Mammary epithelial cell (primary cell): ENCODE measurements at regions of chr11 and their contacts with region 1.

Region 1: GRCh38 chr11:128039140-128040021 is 548.0 kb downstream of the ETS1 start:
- DNase-seq: peak; percentile 88
- H3K4me3 ChIP-seq: no peak overlapping the region
- H3K27ac ChIP-seq: peak overlapping the region; percentile 8
- H3K4me1 ChIP-seq: peaks cover 18% of the 10 kb centered on the region
- H3K27me3 ChIP-seq: no peaks in the 10 kb centered on the region
- CTCF ChIP-seq: peak; percentile 3 to 10

Region 2: GRCh38 chr11:127950162-127950561 is 89.2 kb before region 1 on chr11:
- CTCF ChIA-PET with region 1: no interaction called
- dilution Hi-C with region 1: no loop called
- in situ Hi-C with region 1: no loop called
- intact Hi-C with region 1: no loop called
- DNase-seq: no peak
- H3K4me3 ChIP-seq: no peak overlapping the region
- H3K27ac ChIP-seq: no peak overlapping the region
- H3K4me1 ChIP-seq: no peaks in the 10 kb centered on the region
- H3K27me3 ChIP-seq: no peaks in the 10 kb centered on the region
- CTCF ChIP-seq: no peak

Region 3: DNA sequence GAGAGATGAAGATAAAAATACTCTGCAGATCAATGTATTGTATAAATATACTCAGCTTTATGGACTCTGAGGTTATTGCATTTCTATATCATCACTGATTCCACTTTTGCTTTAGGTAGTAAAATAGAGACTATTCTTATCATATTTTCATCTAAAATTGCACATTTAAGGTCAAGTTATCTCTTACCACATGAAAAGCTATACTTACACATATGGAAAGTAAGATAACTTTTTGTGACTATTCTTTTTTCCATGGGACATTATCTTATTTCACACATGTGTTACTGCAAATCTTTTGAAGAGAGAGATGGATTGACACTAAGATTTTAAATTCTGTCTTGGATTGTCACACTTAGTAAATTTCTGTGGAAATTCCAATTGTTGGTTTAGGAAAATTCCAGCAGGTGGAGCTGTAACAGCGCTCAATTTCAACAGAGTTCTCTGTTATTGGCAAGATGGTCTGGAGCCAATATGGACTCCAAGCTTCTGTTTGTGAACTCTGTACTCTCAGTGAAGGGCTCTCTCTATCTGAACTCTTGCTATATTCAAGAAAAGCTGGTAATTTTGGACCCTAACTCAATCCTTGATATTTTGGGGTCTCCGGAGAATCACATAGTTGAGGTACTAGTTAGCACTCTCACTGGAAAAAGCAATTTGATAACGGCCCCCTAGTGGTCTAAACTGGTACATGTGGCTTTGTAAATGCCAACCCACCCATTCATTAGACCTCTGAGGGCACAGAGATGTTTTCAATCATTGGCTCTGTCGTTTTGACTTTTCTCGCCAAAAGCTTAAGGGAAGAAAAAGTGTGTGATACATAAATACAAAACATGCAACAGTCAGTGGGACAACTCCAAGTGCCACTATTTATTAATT is 118.3 kb after region 1 on chr11:
- CTCF ChIA-PET with region 1: interaction called, 3 read pairs
- dilution Hi-C with region 1: no loop called
- in situ Hi-C with region 1: loop called (anchors 5 to 10 kb)
- intact Hi-C with region 1: no loop called
- DNase-seq: peak; percentile 67
- H3K4me3 ChIP-seq: peak overlapping the region in 2 of 3 experiments; percentile 13 to 26
- H3K27ac ChIP-seq: peak overlapping the region; percentile 11
- H3K4me1 ChIP-seq: no peaks in the 10 kb centered on the region
- H3K27me3 ChIP-seq: no peaks in the 10 kb centered on the region
- CTCF ChIP-seq: peak; percentile 73 to 76

Region 4: DNA sequence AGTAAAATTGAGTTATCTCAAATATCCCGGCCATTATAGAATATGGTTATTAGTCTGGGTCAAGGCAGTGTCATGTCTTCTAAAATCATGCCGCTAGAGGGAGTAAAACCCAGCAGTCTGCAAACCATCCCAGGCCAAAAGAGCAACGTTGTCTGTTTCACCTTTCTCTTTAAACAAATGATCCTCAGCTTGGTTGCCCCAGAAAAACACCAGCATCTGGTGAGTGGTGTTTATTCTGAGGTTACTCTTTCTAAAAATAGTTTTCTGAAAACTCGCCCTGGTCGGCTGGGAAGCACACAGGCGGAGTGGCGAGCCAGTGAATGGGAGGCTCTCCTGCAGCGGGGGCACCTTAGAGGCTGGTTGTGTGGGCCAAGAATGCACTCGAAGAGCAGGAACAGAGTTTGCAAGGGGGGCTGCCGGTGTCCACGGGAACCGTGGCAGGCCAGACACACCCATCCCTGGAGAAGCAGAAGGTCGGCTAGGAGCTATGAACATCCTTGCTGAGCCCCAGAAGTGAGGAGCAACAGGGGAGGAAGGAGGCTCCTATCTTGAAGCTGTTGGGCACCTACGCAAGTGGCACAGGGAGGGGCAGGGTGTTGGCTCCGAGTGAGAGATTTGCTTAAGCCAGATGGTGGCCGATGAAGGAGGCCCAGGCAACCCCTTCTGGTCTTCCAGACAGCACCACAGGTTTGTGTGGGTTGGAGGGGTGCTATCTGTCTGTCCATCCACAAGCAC is 250.9 kb after region 1 on chr11:
- CTCF ChIA-PET with region 1: no interaction called
- dilution Hi-C with region 1: no loop called
- in situ Hi-C with region 1: loop called (anchors 25 kb)
- intact Hi-C with region 1: no loop called
- DNase-seq: peak; percentile 45
- H3K4me3 ChIP-seq: no peak overlapping the region
- H3K27ac ChIP-seq: no peak overlapping the region
- H3K4me1 ChIP-seq: peaks cover 4% of the 10 kb centered on the region
- H3K27me3 ChIP-seq: no peaks in the 10 kb centered on the region
- CTCF ChIP-seq: peak; percentile 79 to 86

Region 5: DNA sequence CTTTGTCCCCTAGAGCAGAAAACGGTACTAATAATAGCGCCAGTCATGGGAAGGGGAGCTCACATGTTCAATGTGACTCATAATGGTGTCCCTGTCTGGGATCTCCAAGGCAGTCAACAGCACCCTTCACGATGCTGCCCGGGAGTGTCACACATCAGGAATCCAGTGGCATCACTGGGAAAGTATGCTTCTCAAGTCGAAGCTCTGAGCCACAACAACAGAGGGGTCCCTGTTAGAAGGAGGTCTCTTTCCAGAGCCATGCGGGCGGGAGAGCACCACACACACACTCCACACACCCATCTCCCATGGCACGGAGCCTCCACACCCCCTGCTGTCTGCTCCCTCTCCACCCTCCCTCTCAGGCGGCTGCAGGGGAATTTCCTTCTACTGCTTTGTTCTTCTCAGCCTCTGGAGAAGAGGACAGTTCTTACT is 428.2 kb after region 1 on chr11:
- CTCF ChIA-PET with region 1: no interaction called
- dilution Hi-C with region 1: no loop called
- in situ Hi-C with region 1: no loop called
- intact Hi-C with region 1: loop called (anchors 5 kb)
- DNase-seq: peak; percentile 93
- H3K4me3 ChIP-seq: no peak overlapping the region
- H3K27ac ChIP-seq: peak overlapping the region; percentile 59
- H3K4me1 ChIP-seq: peaks cover 26% of the 10 kb centered on the region
- H3K27me3 ChIP-seq: no peaks in the 10 kb centered on the region
- CTCF ChIP-seq: peak in 1 of 2 donors; percentile 30

Region 6: GRCh38 chr11:128695539-128696221 is 656.3 kb after region 1 on chr11:
- CTCF ChIA-PET with region 1: no interaction called
- dilution Hi-C with region 1: no loop called
- in situ Hi-C with region 1: no loop called
- intact Hi-C with region 1: loop called (anchors 5 kb)
- DNase-seq: no peak
- H3K4me3 ChIP-seq: peak overlapping the region in 1 of 3 experiments; percentile 73
- H3K27ac ChIP-seq: no peak overlapping the region
- H3K4me1 ChIP-seq: peaks cover 12% of the 10 kb centered on the region
- H3K27me3 ChIP-seq: no peaks in the 10 kb centered on the region
- CTCF ChIP-seq: no peak

Region 7: DNA sequence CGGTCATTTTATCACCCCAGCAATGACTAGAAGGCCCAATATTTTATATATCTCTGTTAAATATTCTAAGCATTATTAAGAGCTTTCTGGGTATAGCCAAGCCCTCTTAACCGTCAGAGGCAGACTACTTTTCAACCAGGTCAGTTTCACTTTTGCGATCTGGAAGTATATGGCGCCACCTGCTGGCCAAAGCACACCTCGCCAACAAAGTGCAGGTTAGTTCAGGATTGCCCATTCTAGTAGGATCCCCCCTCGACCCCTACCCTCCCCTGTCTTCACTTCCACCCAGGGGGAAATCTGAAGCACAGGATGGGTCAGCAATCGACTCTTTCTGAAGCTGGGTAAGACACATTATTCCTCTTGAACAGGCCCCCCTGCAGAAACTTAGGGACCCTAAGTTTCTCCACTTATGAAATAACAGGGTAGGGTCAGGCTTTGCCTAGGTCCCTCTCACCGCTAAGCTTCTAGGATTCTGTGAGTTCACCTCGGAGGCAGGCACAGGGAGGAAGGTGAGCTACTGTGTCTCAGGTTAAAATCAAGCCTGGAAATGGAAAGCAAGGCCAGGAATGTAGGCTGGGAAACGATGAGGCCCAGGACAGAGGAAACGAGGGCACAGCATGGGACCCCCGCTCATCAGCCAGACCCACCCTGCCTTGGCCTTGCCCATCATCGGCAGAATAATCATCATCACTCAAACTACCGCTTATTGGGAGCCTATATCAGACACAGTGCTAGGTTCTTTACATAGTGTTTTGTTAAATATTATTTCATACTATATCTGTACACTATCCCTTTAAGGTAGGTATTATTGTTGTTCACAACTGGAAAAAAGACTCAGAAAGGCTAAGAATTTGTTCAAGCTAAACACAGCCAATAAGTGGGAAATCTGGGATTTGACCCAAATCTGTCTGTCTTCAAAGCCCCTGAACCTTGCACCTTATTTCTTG is 792.1 kb after region 1 on chr11:
- CTCF ChIA-PET with region 1: no interaction called
- dilution Hi-C with region 1: no loop called
- in situ Hi-C with region 1: loop called (anchors 10 kb)
- intact Hi-C with region 1: no loop called
- DNase-seq: peak; percentile 58
- H3K4me3 ChIP-seq: no peak overlapping the region
- H3K27ac ChIP-seq: peak overlapping the region; percentile 26
- H3K4me1 ChIP-seq: peaks cover 6% of the 10 kb centered on the region
- H3K27me3 ChIP-seq: no peaks in the 10 kb centered on the region
- CTCF ChIP-seq: peak; percentile 76 to 85

Region 8: DNA sequence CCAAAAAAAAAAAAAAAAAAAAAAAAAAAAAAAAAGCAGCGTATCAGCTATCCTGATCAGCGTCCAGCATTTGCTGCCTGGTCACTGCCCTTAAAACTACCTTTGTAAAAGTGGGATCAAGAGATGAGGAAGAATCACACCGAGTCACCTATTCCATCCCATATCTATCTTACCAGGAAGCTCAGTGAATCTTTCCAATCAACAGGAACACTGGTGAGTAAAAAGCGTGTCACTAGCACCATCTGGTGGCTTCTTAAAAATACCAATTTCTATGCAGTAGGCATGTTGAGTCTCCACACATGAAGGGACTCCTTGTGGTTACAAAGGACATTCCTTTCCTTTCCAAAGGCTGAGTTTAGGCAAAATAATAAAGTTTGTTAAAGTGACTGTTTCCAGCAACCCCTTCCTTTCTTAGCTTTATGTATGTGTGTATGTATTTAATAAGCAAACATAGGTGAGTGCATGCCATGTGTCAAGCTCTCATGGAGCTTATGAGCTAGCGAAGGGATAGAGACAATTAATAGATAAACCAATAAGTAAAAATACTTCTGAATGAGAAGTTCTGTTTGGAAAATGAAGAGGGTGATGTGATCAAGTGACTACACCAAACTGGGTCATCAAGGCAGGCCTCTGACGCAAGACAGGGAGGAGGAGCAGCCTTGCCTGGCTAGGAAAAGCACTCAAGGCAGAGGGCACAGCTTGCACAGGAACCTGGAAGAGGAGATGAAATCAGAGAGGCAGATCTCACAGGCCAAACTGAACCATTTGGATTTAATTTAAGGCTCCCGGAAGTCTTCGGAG is 917.2 kb after region 1 on chr11:
- CTCF ChIA-PET with region 1: no interaction called
- dilution Hi-C with region 1: no loop called
- in situ Hi-C with region 1: loop called in 1 of 2 experiments (anchors 25 kb)
- intact Hi-C with region 1: no loop called
- DNase-seq: peak; percentile 64
- H3K4me3 ChIP-seq: no peak overlapping the region
- H3K27ac ChIP-seq: no peak overlapping the region
- H3K4me1 ChIP-seq: peaks cover 6% of the 10 kb centered on the region
- H3K27me3 ChIP-seq: no peaks in the 10 kb centered on the region
- CTCF ChIP-seq: peak; percentile 65 to 73